ENCODE measurements at regions of chr1 and their contacts with region 1.

Region 1: GRCh38 chr1:230642263-230642959 is at the start of gene COG2:
- DNase-seq: peak in 1 of 2 donors; percentile 89
- H3K4me3 ChIP-seq: peak within 1 kb of the TSS; percentile 62 to 92
- H3K27ac ChIP-seq: peak within 1 kb of the TSS; percentile 66
- H3K4me1 ChIP-seq: peaks cover 34% of the 10 kb centered on the region
- H3K27me3 ChIP-seq: no peaks in the 10 kb centered on the region
- CTCF ChIP-seq: peak; percentile 97 to 99 (median 99)
- POLR2A ChIP-seq: peak in 1 of 2 donors; percentile 17
- total RNA-seq, gene COG2: 20.4 TPM

Region 2: GRCh38 chr1:230509281-230509977 is 133.0 kb before region 1 on chr1:
- intact Hi-C with region 1: no loop called
- DNase-seq: no peak
- H3K4me3 ChIP-seq: no peak overlapping the region
- H3K27ac ChIP-seq: peak overlapping the region; percentile 51
- H3K4me1 ChIP-seq: peaks cover 38% of the 10 kb centered on the region
- H3K27me3 ChIP-seq: no peaks in the 10 kb centered on the region
- CTCF ChIP-seq: no peak
- POLR2A ChIP-seq: no peak

Region 3: DNA sequence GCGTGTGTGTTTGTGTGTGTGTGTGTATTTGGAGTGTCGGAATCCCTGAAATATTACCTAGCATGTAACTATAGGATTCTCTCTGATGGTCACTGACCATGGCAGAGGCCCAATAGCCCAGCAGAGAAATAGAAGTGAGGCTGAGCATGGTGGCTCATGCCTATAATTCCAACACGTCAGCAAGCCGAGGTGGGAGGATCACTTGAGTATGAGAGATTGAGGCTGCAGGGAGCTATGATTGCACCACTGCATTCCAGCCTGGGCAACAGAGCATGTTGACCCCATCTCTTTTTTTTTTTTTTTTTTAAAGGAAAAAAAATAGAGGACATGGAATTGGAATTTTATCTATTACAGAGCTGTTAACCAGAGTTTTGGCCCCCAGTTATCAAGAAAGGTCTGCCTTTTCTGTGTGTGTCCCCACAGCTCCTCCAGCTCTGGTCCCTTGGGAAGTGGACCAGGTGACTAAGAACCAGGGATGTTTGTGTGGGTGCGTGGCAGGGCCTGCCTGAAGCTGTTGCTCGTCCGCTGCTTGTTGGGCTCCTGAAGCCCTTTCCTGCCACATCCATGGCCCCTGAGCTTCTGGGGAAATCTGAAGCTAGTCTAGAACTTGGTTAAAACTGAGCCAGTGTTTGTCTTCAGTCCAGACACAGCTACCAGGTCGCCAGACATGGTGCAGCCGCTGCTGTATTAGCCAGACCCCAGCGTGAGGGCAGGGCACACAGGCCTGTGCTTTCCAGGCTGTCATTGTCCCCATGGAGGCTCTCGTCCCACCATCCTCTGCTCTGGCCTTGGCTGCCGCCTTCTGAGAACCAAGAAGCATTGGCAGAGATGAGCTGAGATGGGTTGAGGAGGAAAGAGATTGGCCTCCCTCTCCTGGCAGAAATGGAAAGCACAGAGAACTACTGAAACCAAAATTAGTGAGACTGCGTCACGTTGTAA is 130.3 kb after region 1 on chr1:
- intact Hi-C with region 1: loop called (anchors 5 kb)
- DNase-seq: no peak
- H3K4me3 ChIP-seq: no peak overlapping the region
- H3K27ac ChIP-seq: no peak overlapping the region
- H3K4me1 ChIP-seq: no peaks in the 10 kb centered on the region
- H3K27me3 ChIP-seq: no peaks in the 10 kb centered on the region
- CTCF ChIP-seq: peak in 2 of 3 experiments; percentile 36 to 51
- POLR2A ChIP-seq: no peak

Measured in vagina (tissue), 2 donors.